Vagina (tissue), 2 donors: ENCODE measurements at regions of chr6 and their contacts with region 1.

Region 1: GRCh38 chr6:105402939-105403935 is at the start of gene PREP:
- DNase-seq: no peak
- H3K4me3 ChIP-seq: peak within 1 kb of the TSS; percentile 100
- H3K27ac ChIP-seq: peak within 1 kb of the TSS; percentile 91
- H3K4me1 ChIP-seq: peaks cover 41% of the 10 kb centered on the region
- H3K27me3 ChIP-seq: no peaks in the 10 kb centered on the region
- CTCF ChIP-seq: peak; percentile 57 to 84 (median 77)
- POLR2A ChIP-seq: peak in 1 of 2 donors; percentile 40
- total RNA-seq, gene PREP: 19.2 TPM

Region 2: DNA sequence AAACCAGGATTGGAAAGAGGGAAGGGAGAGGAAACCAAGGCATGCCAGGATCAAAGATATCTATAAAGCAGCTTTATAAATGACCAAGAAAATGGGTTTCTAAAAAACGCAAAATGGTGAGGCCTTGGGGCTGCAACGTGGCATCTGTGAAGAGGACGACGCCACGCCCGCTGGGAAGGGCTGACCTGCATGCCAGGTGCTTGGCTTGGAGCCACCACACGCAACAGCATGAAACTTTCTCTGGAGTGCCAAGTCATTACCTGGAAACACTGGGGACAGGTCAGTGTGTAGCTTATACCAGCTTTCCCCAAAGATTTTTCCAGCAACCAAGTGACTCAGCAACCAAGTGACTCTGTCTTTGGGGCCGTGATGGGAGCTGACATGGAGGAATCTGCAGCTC is 305.9 kb before region 1 on chr6:
- intact Hi-C with region 1: loop called (anchors 10 kb)
- DNase-seq: no peak
- H3K4me3 ChIP-seq: no peak overlapping the region
- H3K27ac ChIP-seq: no peak overlapping the region
- H3K4me1 ChIP-seq: no peaks in the 10 kb centered on the region
- H3K27me3 ChIP-seq: no peaks in the 10 kb centered on the region
- CTCF ChIP-seq: no peak
- POLR2A ChIP-seq: no peak